ENCODE measurements at regions of chr12 and their contacts with region 1.

Region 1: GRCh38 chr12:69570545-69571399 is 14.5 kb upstream of the CCT2 start:
- DNase-seq: peak; percentile 86
- H3K4me3 Mint-ChIP-seq: no peak overlapping the region
- H3K27ac Mint-ChIP-seq: no peak overlapping the region
- H3K4me1 Mint-ChIP-seq: peaks cover 12% of the 10 kb centered on the region
- H3K27me3 Mint-ChIP-seq: no peaks in the 10 kb centered on the region

Region 2: DNA sequence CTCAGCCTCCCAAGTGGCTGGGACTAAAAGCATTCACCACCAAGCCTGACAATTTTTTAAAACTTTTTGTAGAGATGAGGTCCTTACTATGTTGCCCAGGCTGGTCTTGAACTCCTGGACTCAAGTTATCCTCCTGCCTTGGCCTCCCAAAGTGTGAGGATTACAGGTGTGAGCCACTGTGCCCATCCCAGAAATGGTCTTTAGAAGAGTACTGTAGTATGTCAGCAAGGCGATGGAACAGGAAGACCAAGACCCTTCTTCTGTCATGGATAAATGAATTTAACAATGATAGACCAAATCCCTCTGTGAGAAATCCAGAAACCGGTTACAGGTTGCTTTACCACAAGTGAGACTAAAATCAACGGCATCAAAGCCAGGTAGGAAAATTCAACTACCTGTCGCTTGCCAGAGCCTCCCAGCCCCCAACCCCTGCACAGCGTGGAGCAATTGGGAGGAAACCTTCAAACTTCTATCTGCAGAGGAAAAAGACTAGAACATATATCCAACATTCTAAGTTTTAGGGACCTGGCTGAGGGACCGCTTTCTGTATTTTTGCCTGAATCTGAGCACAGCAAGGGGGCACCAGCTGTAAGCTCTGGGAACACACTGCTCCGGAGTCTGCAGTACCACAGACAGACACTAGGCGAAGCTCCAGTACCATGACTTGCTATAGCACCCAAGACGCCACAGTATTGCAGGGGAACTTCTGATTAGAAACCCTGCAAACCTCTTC is 280.1 kb before region 1 on chr12:
- intact Hi-C with region 1: loop called (anchors 1 kb)
- DNase-seq: peak; percentile 91
- H3K4me3 Mint-ChIP-seq: no peak overlapping the region
- H3K27ac Mint-ChIP-seq: no peak overlapping the region
- H3K4me1 Mint-ChIP-seq: peaks cover 1% of the 10 kb centered on the region
- H3K27me3 Mint-ChIP-seq: peaks cover 45% of the 10 kb centered on the region

Region 3: GRCh38 chr12:69415471-69416275 is 155.1 kb before region 1 on chr12:
- intact Hi-C with region 1: loop called (anchors 1 kb)
- DNase-seq: peak; percentile 62
- H3K4me3 Mint-ChIP-seq: no peak overlapping the region
- H3K27ac Mint-ChIP-seq: no peak overlapping the region
- H3K4me1 Mint-ChIP-seq: no peaks in the 10 kb centered on the region
- H3K27me3 Mint-ChIP-seq: no peaks in the 10 kb centered on the region

Measured in activated CD4-positive, alpha-beta T cell treated with anti-CD3 and anti-CD28 coated beads, Interleukin-2, amount 10 ng/mL, durations not matched to agents 24 days and 14 days (primary cell).